ENCODE measurements at regions of chr14 and their contacts with region 1.

Region 1: GRCh38 chr14:67704484-67705089 is 2.9 kb downstream of the RDH12 start:
- DNase-seq: no peak
- H3K4me3 ChIP-seq: no peak overlapping the region
- H3K27ac ChIP-seq: no peak overlapping the region
- H3K4me1 ChIP-seq: no peaks in the 10 kb centered on the region
- H3K27me3 ChIP-seq: no peaks in the 10 kb centered on the region
- CTCF ChIP-seq: peak; percentile 46 to 71 (median 61)
- EP300 ChIP-seq: no peak
- POLR2A ChIP-seq: no peak

Region 2: DNA sequence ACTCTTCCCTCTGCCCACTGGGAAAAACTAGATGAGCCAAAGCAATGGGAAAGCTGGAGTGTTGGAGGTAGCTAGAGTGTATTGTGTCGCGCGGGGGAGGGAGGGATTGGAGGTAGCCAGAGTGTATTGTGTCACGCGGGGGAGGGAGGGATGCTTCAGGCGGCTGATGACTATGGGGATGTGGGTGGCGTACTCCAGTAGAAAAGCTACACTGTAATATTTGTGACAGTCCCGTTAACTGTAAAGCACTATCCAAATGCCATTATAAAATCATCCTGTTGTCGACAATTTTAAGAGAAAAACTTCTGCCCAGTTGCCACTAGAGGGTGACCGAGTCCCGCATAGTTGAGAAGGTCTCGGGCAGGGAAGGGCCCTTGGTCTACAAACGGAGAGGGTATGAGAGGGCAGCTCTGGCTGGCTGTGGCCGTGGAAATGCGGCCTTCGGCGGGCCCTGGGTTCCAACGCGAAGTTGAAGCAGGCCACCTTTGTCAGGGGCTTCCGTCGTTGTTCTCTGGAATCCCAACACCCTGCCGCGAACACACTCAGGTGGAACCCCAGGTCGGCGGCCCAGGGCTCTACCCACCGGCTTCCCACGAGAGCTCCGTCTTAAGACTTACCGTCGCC is 277.5 kb before region 1 on chr14:
- intact Hi-C with region 1: loop called (anchors 5 kb)
- DNase-seq: peak; percentile 86
- H3K4me3 ChIP-seq: no peak overlapping the region
- H3K27ac ChIP-seq: no peak overlapping the region
- H3K4me1 ChIP-seq: peaks cover 0 to 25% (median 8%) of the 10 kb centered on the region in 4 donors
- H3K27me3 ChIP-seq: peaks cover 0 to 4% (median 0%) of the 10 kb centered on the region in 3 donors
- CTCF ChIP-seq: peak; percentile 79 to 85 (median 83)
- EP300 ChIP-seq: no peak
- POLR2A ChIP-seq: no peak

Region 3: DNA sequence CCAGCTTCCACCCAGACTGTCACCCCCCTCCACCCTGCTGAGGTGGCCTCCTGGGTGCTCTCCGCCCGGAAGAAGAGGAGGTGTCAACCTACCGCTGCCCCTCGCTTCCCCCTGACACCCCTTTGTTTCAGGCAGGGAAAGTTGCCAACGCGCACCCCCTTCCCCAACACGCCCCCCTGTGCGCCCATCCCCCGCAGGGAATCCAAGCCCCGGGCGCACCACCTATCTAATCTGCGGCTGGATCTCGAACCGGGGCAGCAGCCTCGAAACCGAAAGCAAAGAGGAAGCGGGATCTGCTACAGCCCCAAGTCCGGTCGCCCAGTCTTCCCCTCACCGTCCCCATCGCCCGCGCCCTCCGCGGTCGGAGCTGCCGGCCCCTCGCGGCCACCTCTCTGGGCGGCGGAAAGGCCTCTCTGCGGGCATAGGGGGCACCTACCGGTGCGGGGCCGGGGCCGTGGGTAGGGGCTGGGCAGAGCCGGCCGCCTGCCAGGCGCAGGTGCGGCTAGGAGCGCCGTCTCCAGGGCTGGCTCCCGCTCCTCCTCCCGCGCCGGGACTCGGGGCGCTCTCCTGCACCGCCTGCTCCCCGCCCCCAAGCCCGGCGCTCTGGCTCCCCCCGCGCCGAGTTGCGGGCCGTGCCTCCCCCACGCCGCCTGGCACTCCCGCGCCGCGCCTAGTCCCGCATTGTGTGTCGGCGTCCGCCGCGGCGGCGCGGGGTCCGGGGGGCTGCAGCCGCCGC is 189.8 kb before region 1 on chr14:
- intact Hi-C with region 1: loop called (anchors 10 kb)
- DNase-seq: peak; percentile 77
- H3K4me3 ChIP-seq: peak overlapping the region; percentile 83 to 99 (median 94)
- H3K27ac ChIP-seq: peak overlapping the region; percentile 70 to 78 (median 76)
- H3K4me1 ChIP-seq: peaks cover 0 to 24% (median 18%) of the 10 kb centered on the region in 4 donors
- H3K27me3 ChIP-seq: no peaks in the 10 kb centered on the region
- CTCF ChIP-seq: no peak
- EP300 ChIP-seq: no peak
- POLR2A ChIP-seq: no peak

Region 4: DNA sequence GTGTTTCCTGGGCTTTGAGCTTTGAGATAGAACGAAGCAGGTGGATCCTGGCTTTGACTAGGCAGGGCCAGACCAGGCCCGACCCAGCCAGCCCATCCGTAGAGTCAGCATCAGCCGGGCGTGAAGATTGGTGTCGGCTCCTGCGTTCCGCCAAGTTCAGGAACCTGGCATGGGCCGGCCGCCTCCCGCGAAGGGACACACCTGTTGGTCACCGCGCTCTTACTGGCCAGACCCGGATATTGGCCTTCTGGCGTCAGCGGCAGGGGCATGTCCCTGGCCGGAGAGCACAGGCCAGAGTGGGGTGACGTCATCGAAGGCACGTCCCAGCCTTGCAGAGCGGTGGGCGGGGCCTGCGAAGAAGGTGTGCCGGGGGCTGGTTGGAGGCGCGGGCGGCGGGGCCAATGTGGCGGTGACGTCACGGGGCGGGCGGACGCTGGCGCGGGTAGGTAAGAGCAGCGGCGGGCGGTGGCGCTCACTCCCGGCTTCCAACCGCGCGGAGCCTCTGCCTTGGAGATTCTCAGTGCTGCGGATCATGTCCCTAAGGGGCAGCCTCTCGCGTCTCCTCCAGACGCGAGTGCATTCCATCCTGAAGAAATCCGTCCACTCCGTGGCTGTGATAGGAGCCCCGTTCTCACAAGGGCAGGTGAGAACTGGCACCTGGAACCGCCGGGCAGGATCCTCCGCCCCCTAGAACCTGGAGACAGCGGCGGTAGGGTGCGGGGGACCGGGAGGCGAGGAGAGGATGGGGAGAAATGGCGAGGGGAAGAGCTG is 85.0 kb before region 1 on chr14 and contains the start of gene ARG2:
- intact Hi-C with region 1: loop called (anchors 1 kb)
- DNase-seq: peak; percentile 98
- H3K4me3 ChIP-seq: peak within 1 kb of the TSS; percentile 46 to 64 (median 60)
- H3K27ac ChIP-seq: peak within 1 kb of the TSS; percentile 75 to 80 (median 78)
- H3K4me1 ChIP-seq: peaks cover 0 to 45% (median 40%) of the 10 kb centered on the region in 4 donors
- H3K27me3 ChIP-seq: no peaks in the 10 kb centered on the region
- CTCF ChIP-seq: no peak
- EP300 ChIP-seq: peak in 1 of 4 donors; percentile 43
- POLR2A ChIP-seq: peak; percentile 42 to 60
- total RNA-seq, gene ARG2: 1.6 to 11.4 (median 5.5) TPM

Region 5: GRCh38 chr14:67666750-67667449 is 37.7 kb before region 1 on chr14:
- intact Hi-C with region 1: loop called (anchors 5 kb)
- DNase-seq: no peak
- H3K4me3 ChIP-seq: no peak overlapping the region
- H3K27ac ChIP-seq: peak overlapping the region in 1 of 4 donors; percentile 26
- H3K4me1 ChIP-seq: peaks cover 0 to 31% (median 13%) of the 10 kb centered on the region in 4 donors
- H3K27me3 ChIP-seq: no peaks in the 10 kb centered on the region
- CTCF ChIP-seq: peak; percentile 33 to 62 (median 59)
- EP300 ChIP-seq: no peak
- POLR2A ChIP-seq: no peak

Measured in sigmoid colon (tissue), 7 donors.